ENCODE measurements at regions of chr19 and their contacts with region 1.

Region 1: GRCh38 chr19:35931161-35931873 is 4.9 kb upstream of the LRFN3 start:
- DNase-seq: peak; percentile 100
- ATAC-seq: peak; percentile 96
- H3K4me3 Mint-ChIP-seq: peak overlapping the region; percentile 74
- H3K27ac Mint-ChIP-seq: peak overlapping the region; percentile 91
- H3K4me1 Mint-ChIP-seq: peaks cover 33% of the 10 kb centered on the region
- H3K27me3 Mint-ChIP-seq: peaks cover 2% of the 10 kb centered on the region

Region 2: DNA sequence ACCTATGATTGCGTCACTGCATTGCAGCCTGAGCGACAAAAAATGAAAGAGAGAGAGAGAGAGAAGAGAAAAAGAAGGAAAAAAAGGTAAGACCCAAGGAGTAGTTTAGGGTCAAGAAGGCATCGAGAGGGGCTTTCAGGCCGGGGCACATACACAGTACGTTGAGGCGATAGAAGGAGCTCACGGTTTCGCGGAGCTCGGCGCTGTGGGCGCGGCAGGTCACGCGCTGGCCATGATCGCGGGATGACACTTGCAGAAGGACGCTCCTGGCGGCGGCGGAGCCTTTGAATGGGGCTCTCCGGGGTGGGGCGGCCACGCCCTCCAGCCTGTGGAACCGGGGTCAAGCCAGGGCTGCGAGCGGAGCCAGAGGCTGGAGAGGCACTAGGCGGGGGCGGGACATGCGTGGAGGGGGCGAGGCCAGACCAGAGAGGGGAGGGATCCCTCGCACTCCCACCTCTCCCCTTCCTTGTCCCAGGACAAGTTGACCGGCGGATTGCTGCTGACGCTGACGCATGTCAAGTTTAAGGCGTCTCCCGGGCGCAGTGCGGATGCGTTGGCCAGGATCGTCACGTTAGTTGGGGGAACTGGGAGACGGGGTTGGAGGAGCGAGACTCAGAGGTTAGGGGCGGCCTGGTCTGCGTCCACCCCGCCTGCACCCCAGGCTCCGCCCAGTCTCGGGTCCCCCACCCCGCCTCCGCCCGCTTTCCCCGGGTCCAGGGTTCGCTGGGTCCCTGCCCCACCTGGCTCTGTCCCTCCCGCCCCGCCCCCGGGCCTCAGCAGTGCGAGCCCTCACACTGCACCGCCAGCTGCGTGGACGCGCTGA is 85.9 kb before region 1 on chr19:
- CTCF ChIA-PET with region 1: no interaction called
- POLR2A ChIA-PET with region 1: no interaction called
- DNase-seq: peak; percentile 26
- ATAC-seq: peak; percentile 51
- H3K4me3 Mint-ChIP-seq: peak overlapping the region; percentile 30
- H3K27ac Mint-ChIP-seq: no peak overlapping the region
- H3K4me1 Mint-ChIP-seq: peaks cover 15% of the 10 kb centered on the region
- H3K27me3 Mint-ChIP-seq: peaks cover 49% of the 10 kb centered on the region

Region 3: DNA sequence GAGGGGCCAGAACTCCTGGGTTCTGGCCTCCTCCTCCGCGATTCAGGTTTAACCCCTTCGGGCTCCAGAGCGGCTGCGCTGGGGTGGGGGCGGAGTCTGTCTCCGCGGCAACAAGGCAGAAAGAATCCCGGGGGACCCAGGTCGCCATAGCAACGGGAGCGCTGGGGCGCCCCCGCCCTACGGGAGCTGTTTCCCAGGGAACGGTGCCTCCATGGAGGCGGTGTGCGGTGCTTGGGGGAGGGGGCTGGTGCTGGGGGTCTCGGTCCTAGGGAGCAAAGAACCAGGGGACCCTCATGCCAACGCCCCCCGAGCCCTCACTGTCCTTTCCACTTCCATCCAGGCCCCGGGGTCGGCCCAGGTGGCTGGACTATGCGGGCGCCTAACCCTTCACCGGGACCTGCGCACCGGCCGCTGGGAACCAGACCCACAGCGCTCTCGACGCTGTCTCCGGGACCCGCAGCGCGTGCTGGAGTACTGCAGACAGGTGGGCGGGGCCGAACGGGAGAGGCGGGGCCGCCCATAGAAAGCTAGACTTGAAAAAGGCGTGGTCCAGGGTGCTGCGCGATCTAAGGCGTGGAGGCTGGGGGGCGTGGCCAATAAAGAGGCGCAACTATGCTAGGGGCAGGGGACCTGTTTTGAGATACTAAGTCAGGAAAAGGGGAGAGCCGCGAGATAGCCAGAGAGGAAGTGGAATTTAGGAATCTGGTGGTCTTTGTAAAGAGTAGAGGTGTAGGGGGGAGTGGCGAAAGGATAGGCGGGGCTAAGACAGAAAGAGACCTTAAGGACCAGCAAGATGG is 61.8 kb before region 1 on chr19:
- CTCF ChIA-PET with region 1: interaction called, 10 read pairs
- POLR2A ChIA-PET with region 1: interaction called, 3 read pairs
- DNase-seq: peak; percentile 90
- ATAC-seq: peak; percentile 88
- H3K4me3 Mint-ChIP-seq: peak overlapping the region; percentile 60
- H3K27ac Mint-ChIP-seq: peak overlapping the region; percentile 2
- H3K4me1 Mint-ChIP-seq: peaks cover 19% of the 10 kb centered on the region
- H3K27me3 Mint-ChIP-seq: peaks cover 28% of the 10 kb centered on the region

Region 4: GRCh38 chr19:35882114-35882832 is 49.0 kb before region 1 on chr19:
- CTCF ChIA-PET with region 1: interaction called, 95 read pairs
- POLR2A ChIA-PET with region 1: interaction called, 4 read pairs
- DNase-seq: peak; percentile 73
- ATAC-seq: peak; percentile 31
- H3K4me3 Mint-ChIP-seq: no peak overlapping the region
- H3K27ac Mint-ChIP-seq: no peak overlapping the region
- H3K4me1 Mint-ChIP-seq: peaks cover 12% of the 10 kb centered on the region
- H3K27me3 Mint-ChIP-seq: peaks cover 5% of the 10 kb centered on the region

Region 5: GRCh38 chr19:35894342-35894741 is 37.0 kb before region 1 on chr19:
- CTCF ChIA-PET with region 1: interaction called, 29 read pairs
- POLR2A ChIA-PET with region 1: interaction called, 4 read pairs
- DNase-seq: no peak
- ATAC-seq: no peak
- H3K4me3 Mint-ChIP-seq: no peak overlapping the region
- H3K27ac Mint-ChIP-seq: peak overlapping the region; percentile 34
- H3K4me1 Mint-ChIP-seq: peaks cover 26% of the 10 kb centered on the region
- H3K27me3 Mint-ChIP-seq: no peaks in the 10 kb centered on the region

Region 6: GRCh38 chr19:35899547-35900214 is 31.6 kb before region 1 on chr19:
- CTCF ChIA-PET with region 1: interaction called, 29 read pairs
- POLR2A ChIA-PET with region 1: interaction called, 22 read pairs
- DNase-seq: peak; percentile 92
- ATAC-seq: peak; percentile 37
- H3K4me3 Mint-ChIP-seq: peak overlapping the region; percentile 87
- H3K27ac Mint-ChIP-seq: peak overlapping the region; percentile 95
- H3K4me1 Mint-ChIP-seq: peaks cover 49% of the 10 kb centered on the region
- H3K27me3 Mint-ChIP-seq: no peaks in the 10 kb centered on the region

Region 7: DNA sequence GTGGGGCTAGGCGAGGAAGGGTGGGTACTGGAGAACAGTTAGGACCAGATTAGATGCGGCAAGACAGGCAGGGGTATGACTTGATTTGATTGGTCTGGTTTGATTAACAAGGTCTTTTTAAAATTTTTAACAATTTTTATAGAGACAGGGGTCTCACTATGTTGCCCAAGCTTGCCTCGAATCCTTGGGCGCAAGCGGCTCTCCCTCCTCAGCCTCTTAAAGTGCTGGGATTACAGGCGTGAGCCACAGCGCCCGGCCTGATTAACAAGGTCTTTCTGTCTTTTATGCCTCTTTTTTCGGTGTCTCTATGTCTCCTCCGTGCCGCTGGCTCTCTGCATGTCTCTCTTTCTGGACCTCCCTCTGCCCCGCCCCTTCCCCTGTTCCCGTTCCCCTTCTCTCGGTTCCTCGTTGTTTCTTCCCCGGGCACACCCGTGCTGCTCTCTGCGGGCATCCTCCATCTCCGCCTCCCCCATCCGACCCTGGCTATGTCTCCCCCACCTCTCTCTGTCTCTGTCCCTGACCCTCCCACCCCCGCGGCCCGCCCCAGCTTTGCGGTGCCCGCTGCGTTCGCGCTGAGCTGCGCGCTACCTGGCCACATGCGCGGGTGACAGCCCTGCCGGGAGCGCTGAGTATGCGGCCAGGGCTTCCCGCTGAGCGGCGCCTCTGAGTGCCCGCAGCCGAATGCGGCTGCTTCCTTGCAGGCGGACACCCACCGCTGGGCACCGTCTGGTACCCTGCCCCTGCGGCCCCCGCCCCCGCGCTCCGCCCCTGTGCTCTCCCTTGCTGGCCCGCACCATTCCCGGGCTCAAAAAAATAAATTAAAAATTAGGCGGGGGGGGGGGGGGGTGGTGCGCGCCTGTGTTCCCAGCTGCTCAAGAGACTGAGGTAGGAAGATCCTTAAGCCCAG is 55.6 kb after region 1 on chr19:
- CTCF ChIA-PET with region 1: no interaction called
- POLR2A ChIA-PET with region 1: no interaction called
- DNase-seq: no peak
- ATAC-seq: peak; percentile 75
- H3K4me3 Mint-ChIP-seq: peak overlapping the region; percentile 43
- H3K27ac Mint-ChIP-seq: no peak overlapping the region
- H3K4me1 Mint-ChIP-seq: peaks cover 3% of the 10 kb centered on the region
- H3K27me3 Mint-ChIP-seq: peaks cover 43% of the 10 kb centered on the region

Region 8: GRCh38 chr19:36032251-36033104 is 101.2 kb after region 1 on chr19 and contains the start of gene CLIP3:
- CTCF ChIA-PET with region 1: no interaction called
- POLR2A ChIA-PET with region 1: no interaction called
- DNase-seq: peak; percentile 39
- ATAC-seq: peak; percentile 58
- H3K4me3 Mint-ChIP-seq: peak within 1 kb of the TSS; percentile 29
- H3K27ac Mint-ChIP-seq: peak within 1 kb of the TSS; percentile 17
- H3K4me1 Mint-ChIP-seq: peaks cover 30% of the 10 kb centered on the region
- H3K27me3 Mint-ChIP-seq: no peaks in the 10 kb centered on the region
- total RNA-seq, gene CLIP3: 0.74 to 1.7 TPM

Region 9: GRCh38 chr19:36054119-36054732 is 122.9 kb after region 1 on chr19 and contains the start of gene THAP8:
- CTCF ChIA-PET with region 1: no interaction called
- POLR2A ChIA-PET with region 1: no interaction called
- DNase-seq: peak; percentile 100
- ATAC-seq: peak; percentile 91
- H3K4me3 Mint-ChIP-seq: peak within 1 kb of the TSS; percentile 97
- H3K27ac Mint-ChIP-seq: peak within 1 kb of the TSS; percentile 97
- H3K4me1 Mint-ChIP-seq: peaks cover 44% of the 10 kb centered on the region
- H3K27me3 Mint-ChIP-seq: no peaks in the 10 kb centered on the region
- total RNA-seq, gene THAP8: 5.7 to 5.8 TPM

Measured in activated CD8-positive, alpha-beta T cell treated with anti-CD3 and anti-CD28 coated beads, Interleukin-2, amount 10 ng/mL, durations not matched to agents 7 days and 5 days (primary cell).